Left ventricle myocardium superior (tissue), 1 donor: ENCODE measurements at regions of chr15 and their contacts with region 1.

Region 1: DNA sequence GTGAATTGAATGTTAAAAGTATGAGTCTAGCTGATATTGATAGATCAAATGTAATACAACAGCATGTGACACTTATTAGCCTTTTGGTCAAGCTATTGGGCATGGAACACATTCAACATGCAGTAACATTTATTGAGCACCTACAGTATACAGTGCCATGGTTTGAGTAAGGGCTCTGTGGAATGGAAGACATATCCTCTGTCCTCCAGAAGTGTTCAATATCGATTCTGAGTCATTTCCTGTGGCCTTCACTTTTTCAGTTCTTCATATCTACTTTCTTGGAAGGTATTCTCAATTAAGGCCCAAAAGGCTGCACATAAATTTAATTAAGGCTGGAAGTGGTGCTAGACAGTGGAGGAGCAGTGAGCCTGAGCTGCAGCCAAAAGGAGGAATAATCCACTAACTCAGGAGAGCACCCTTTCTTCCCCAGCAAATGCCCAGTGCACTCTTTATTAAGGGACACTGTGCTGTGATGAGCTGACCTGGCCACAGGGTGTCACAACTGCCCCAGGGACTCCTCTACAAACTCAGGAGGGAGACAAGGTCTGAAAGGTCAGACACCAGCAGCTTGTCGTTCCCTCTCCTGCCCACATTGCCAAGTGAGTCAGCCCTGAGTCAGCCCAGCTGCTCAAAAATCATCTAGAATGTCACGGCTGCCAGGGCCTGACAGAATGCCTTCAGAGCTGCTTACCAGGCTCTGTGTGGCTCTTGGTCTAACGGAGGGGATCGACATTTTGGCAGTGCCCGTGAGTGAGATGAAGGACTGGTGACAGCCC is 544.8 kb downstream of the AGBL1 start:
- DNase-seq: peak; percentile 80
- ATAC-seq: peak; percentile 100

Region 2: GRCh38 chr15:86526938-86527690 is 97.3 kb before region 1 on chr15:
- intact Hi-C with region 1: no loop called
- DNase-seq: no peak
- ATAC-seq: no peak

Region 3: GRCh38 chr15:86603466-86603865 is 21.0 kb before region 1 on chr15:
- intact Hi-C with region 1: no loop called
- DNase-seq: no peak
- ATAC-seq: no peak

Region 4: DNA sequence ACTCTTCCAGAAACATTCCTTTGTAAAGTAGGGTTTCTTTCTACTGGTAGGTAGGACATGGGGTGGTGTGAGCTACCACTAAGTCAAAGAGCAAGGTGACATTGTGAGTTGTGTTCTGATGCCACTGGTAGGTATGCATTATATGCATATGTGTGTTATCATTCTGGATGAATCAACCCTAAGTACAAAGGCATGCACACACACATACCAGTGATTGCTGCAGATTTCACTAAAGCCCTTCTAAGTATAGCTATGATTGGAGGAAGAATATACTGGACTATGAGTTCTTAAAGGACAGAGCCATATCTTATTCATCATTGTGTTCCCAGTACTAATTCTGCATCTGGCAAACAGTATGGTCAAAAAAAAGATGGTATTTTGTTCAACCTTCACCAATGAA is 101.2 kb after region 1 on chr15:
- intact Hi-C with region 1: no loop called
- DNase-seq: no peak
- ATAC-seq: no peak

Region 5: GRCh38 chr15:87031540-87032230 is 407.2 kb after region 1 on chr15:
- intact Hi-C with region 1: no loop called
- DNase-seq: no peak
- ATAC-seq: peak; percentile 45

Region 6: GRCh38 chr15:88246666-88247446 is 1622.4 kb after region 1 on chr15:
- intact Hi-C with region 1: loop called (anchors 10 kb)
- DNase-seq: peak; percentile 85
- ATAC-seq: peak; percentile 86